Left ventricle myocardium inferior (tissue), 1 donor: ENCODE measurements at regions of chr3 and their contacts with region 1.

Region 1: GRCh38 chr3:112814266-112814665 is 32.4 kb downstream of the CD200R1L start:
- DNase-seq: no peak
- H3K4me3 ChIP-seq: no peak overlapping the region
- H3K27ac ChIP-seq: peak overlapping the region; percentile 81
- H3K4me1 ChIP-seq: peaks cover 26% of the 10 kb centered on the region
- H3K27me3 ChIP-seq: peaks cover 4% of the 10 kb centered on the region
- CTCF ChIP-seq: peak; percentile 50

Region 2: GRCh38 chr3:112642912-112643506 is 171.3 kb before region 1 on chr3:
- intact Hi-C with region 1: loop called (anchors 5 kb)
- DNase-seq: peak; percentile 80
- H3K4me3 ChIP-seq: peak overlapping the region; percentile 39
- H3K27ac ChIP-seq: peak overlapping the region; percentile 82
- H3K4me1 ChIP-seq: peaks cover 29% of the 10 kb centered on the region
- H3K27me3 ChIP-seq: peaks cover 62% of the 10 kb centered on the region
- CTCF ChIP-seq: peak; percentile 83

Region 3: GRCh38 chr3:112734718-112735350 is 79.4 kb before region 1 on chr3:
- intact Hi-C with region 1: loop called (anchors 10 kb)
- DNase-seq: no peak
- H3K4me3 ChIP-seq: no peak overlapping the region
- H3K27ac ChIP-seq: no peak overlapping the region
- H3K4me1 ChIP-seq: no peaks in the 10 kb centered on the region
- H3K27me3 ChIP-seq: no peaks in the 10 kb centered on the region
- CTCF ChIP-seq: peak; percentile 63